ENCODE measurements at regions of chr1 and their contacts with region 1.

Region 1: DNA sequence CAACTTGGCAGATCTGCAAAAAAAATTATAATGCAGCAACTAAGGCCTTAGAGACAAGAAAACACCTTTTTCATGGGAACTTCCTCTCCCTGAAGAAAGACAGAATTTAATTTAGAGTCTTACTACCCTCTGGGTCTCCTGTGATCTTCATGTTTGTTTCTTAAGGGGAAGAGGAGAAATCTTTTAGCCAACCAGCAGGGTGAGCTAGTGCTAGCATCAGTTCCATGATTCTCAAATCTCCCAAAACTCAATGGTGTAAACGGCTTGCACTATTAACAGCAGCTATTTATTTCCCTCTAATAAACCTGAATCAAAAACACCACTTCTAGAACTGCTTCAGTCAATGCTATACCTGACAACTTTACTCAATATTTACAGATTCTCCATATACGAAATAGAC is 3.8 kb downstream of the ZNF644 start:
- DNase-seq: peak; percentile 38
- ATAC-seq: no peak
- H3K4me3 ChIP-seq: no peak overlapping the region
- H3K27ac ChIP-seq: no peak overlapping the region
- H3K4me1 ChIP-seq: peaks cover 66% of the 10 kb centered on the region
- H3K27me3 ChIP-seq: no peaks in the 10 kb centered on the region
- CTCF ChIP-seq: peak; percentile 59

Region 2: GRCh38 chr1:91070298-91070697 is 52.3 kb after region 1 on chr1:
- CTCF ChIA-PET with region 1: no interaction called
- POLR2A ChIA-PET with region 1: no interaction called
- intact Hi-C with region 1: no loop called
- DNase-seq: no peak
- ATAC-seq: peak; percentile 31
- H3K4me3 ChIP-seq: no peak overlapping the region
- H3K27ac ChIP-seq: no peak overlapping the region
- H3K4me1 ChIP-seq: no peaks in the 10 kb centered on the region
- H3K27me3 ChIP-seq: peaks cover 18% of the 10 kb centered on the region
- CTCF ChIP-seq: no peak

Region 3: GRCh38 chr1:91165033-91165654 is 147.1 kb after region 1 on chr1:
- CTCF ChIA-PET with region 1: interaction called, 4 read pairs
- POLR2A ChIA-PET with region 1: no interaction called
- intact Hi-C with region 1: loop called (anchors 5 kb)
- DNase-seq: peak; percentile 75
- ATAC-seq: peak; percentile 95
- H3K4me3 ChIP-seq: no peak overlapping the region
- H3K27ac ChIP-seq: no peak overlapping the region
- H3K4me1 ChIP-seq: no peaks in the 10 kb centered on the region
- H3K27me3 ChIP-seq: 0 out of 2 replicates have a peak, but pooled peaks cover 8% of the 10 kb centered on the region
- CTCF ChIP-seq: peak; percentile 94

Region 4: DNA sequence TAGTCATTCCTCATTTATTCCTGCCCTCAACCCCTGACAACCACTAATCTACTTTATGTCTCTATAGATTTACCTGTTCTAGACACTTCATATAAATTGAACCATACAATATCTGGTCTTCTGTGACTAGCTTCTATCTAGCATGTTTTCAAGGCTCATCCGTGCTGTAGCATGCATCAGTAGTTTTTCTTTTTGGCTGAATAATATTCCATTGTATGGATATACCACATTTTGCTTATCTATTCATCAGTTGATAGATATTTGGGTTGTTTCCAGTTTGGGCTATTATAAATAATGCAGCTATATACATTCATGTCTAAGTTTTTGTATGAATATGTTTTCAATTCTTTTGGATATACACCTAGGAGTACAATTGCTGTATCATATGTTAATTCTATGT is 285.2 kb after region 1 on chr1:
- CTCF ChIA-PET with region 1: no interaction called
- POLR2A ChIA-PET with region 1: no interaction called
- intact Hi-C with region 1: no loop called
- DNase-seq: no peak
- ATAC-seq: no peak
- H3K4me3 ChIP-seq: no peak overlapping the region
- H3K27ac ChIP-seq: no peak overlapping the region
- H3K4me1 ChIP-seq: no peaks in the 10 kb centered on the region
- H3K27me3 ChIP-seq: no peaks in the 10 kb centered on the region
- CTCF ChIP-seq: no peak

Measured in PC-3 (cell line).